Mammary epithelial cell (primary cell): ENCODE measurements at regions of chr7 and their contacts with region 1.

Region 1: GRCh38 chr7:32335107-32335506 is 155.1 kb downstream of the LSM5 start:
- DNase-seq: peak; percentile 75
- H3K4me3 ChIP-seq: no peak overlapping the region
- H3K27ac ChIP-seq: no peak overlapping the region
- H3K4me1 ChIP-seq: peaks cover 24% of the 10 kb centered on the region
- H3K27me3 ChIP-seq: no peaks in the 10 kb centered on the region
- CTCF ChIP-seq: no peak

Region 2: DNA sequence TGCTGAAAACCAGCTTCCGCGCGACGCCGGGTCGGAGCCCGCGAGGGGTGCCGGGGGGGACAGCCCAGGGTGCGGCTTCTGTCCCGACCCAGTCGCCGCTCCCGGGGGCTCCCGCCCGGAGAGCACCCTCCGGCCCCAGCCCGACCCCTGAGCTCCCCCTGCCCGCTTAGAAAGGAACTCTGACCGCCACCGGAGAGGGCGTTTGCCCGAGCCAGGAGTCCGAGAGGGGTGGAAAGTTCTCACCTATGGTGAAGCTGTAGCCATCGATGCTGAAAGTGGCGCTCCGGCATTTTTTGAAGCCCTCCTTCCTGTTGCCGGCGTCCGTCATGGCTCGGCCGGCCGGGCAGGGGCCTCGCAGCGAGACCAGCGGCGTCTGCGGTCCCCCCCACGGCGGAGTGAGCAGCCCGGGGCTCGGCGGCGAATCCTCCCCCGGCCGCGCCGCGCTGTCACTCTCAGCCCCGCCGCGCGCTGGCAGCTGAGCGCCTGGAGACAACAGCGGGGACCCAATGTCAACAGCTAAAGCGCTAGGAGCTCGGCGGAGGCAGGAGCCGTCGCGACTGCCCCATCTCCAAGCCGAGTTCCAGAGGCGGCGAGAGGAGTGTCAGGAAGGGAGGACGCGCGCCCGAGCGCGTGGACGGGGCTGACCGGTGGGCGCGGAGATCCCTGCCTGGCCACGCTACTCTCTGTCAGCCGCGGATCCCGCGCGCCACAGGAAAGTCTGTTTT is 36.5 kb before region 1 on chr7:
- CTCF ChIA-PET with region 1: no interaction called
- dilution Hi-C with region 1: no loop called
- in situ Hi-C with region 1: no loop called
- intact Hi-C with region 1: loop called (anchors 5 kb)
- DNase-seq: peak; percentile 20
- H3K4me3 ChIP-seq: peak overlapping the region; percentile 47 to 62 (median 49)
- H3K27ac ChIP-seq: no peak overlapping the region
- H3K4me1 ChIP-seq: peaks cover 14% of the 10 kb centered on the region
- H3K27me3 ChIP-seq: peaks cover 2% of the 10 kb centered on the region
- CTCF ChIP-seq: peak in 1 of 2 donors; percentile 3